Dorsolateral prefrontal cortex (tissue), 120 donors: ENCODE measurements at regions of chr9 and their contacts with region 1.

Region 1: DNA sequence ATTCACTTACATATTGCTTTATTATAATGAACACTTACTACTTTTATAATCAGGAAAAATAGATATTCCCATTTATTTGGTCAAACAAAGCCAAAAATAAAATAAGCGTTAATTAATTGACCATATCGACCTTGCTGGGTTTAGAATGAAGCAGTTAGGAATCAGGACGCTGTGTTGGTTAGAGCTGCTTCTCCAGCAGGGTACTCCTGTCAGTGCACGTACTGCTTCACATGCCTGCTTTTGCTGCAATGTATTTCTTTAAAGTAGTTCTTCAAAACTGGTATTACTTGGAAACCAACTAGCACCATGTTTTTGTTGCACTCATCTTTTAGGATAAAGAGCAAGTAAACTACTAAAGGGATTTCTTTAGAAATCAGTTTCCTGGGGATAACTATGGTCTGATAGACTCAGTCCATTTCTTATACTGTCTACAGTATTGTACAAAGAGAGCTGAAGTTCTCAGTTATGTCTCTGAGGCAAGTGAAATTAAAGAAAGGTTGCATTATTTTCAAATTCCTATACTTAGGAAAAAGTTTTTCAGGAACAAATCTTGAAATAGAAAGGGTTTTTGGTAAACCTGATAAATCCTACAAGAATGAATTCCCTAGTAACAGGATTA is 6.8 kb upstream of the TRMO start:
- DNase-seq: no peak
- H3K4me3 ChIP-seq: no peak overlapping the region
- H3K27ac ChIP-seq: no peak overlapping the region
- H3K27me3 ChIP-seq: no peaks in the 10 kb centered on the region
- CTCF ChIP-seq: no peak

Region 2: DNA sequence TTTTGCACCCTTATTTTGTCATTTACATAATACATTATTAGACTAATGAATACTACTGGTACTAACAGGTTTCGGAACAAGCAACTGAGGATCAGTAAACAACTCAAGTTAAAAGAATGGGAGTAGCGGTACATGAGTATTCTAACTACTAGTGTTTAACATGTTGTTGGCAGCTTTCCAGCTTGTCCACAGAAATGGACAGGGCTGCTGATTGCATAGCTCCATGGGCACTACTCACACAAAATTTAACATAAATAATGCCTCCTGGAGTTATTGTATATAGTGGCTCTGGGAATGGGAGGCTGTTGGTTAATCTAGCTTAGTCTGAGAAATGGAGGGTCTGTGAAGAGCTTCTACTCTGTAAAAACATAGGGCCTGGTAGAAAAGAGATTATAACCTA is 288.8 kb before region 1 on chr9:
- intact Hi-C with region 1: no loop called
- DNase-seq: no peak
- H3K4me3 ChIP-seq: no peak overlapping the region
- H3K27ac ChIP-seq: peak overlapping the region in 5 of 59 donors; percentile 0 to 38 (median 11)
- H3K27me3 ChIP-seq: no peaks in the 10 kb centered on the region
- CTCF ChIP-seq: no peak

Region 3: GRCh38 chr9:98207606-98208005 is 278.5 kb after region 1 on chr9:
- intact Hi-C with region 1: loop called in 1 of 2 experiments (anchors 2 kb)
- DNase-seq: no peak
- H3K4me3 ChIP-seq: no peak overlapping the region
- H3K27ac ChIP-seq: no peak overlapping the region
- H3K27me3 ChIP-seq: no peaks in the 10 kb centered on the region
- CTCF ChIP-seq: no peak